ENCODE measurements at regions of chr14 and their contacts with region 1.

Region 1: DNA sequence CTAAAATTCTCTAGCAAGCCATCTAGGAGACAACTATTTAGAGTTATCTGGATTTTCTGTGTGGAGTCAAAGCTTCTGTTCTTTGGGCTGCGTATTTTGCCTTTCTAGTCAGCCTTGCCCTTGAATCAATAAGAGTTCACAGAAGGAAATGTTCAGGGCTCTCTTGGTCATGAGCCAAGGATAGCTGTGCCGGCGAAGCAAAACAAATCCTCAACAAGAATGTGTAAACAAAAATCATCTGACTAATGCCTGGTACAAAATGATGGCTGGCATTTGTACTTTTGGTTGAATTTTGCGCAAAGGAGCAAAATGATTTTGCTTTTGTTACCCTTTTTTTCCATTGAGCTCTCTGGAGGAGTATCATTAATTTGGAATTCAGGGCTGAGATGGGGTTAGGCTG is 171.1 kb downstream of the DACT1 start:
- DNase-seq: no peak
- ATAC-seq: no peak
- H3K4me3 ChIP-seq: no peak overlapping the region
- H3K27ac ChIP-seq: peak overlapping the region in 1 of 12 donors; percentile 25
- H3K4me1 ChIP-seq: peaks cover 0 to 6% (median 0%) of the 10 kb centered on the region in 12 donors
- H3K27me3 ChIP-seq: no peaks in the 10 kb centered on the region
- CTCF ChIP-seq: no peak
- POLR2A ChIP-seq: no peak

Region 2: GRCh38 chr14:58765418-58765831 is 43.4 kb before region 1 on chr14:
- intact Hi-C with region 1: loop called in 1 of 10 experiments (anchors 5 kb)
- DNase-seq: peak in 4 of 5 donors; percentile 61 to 72 (median 68)
- ATAC-seq: peak; percentile 69 to 94 (median 84)
- H3K4me3 ChIP-seq: no peak overlapping the region
- H3K27ac ChIP-seq: peak overlapping the region in 8 of 12 donors; percentile 15 to 63 (median 36)
- H3K4me1 ChIP-seq: peaks cover 0 to 4% (median 0%) of the 10 kb centered on the region in 12 donors
- H3K27me3 ChIP-seq: no peaks in the 10 kb centered on the region
- CTCF ChIP-seq: no peak
- POLR2A ChIP-seq: no peak